ENCODE measurements at regions of chr7 and their contacts with region 1.

Region 1: DNA sequence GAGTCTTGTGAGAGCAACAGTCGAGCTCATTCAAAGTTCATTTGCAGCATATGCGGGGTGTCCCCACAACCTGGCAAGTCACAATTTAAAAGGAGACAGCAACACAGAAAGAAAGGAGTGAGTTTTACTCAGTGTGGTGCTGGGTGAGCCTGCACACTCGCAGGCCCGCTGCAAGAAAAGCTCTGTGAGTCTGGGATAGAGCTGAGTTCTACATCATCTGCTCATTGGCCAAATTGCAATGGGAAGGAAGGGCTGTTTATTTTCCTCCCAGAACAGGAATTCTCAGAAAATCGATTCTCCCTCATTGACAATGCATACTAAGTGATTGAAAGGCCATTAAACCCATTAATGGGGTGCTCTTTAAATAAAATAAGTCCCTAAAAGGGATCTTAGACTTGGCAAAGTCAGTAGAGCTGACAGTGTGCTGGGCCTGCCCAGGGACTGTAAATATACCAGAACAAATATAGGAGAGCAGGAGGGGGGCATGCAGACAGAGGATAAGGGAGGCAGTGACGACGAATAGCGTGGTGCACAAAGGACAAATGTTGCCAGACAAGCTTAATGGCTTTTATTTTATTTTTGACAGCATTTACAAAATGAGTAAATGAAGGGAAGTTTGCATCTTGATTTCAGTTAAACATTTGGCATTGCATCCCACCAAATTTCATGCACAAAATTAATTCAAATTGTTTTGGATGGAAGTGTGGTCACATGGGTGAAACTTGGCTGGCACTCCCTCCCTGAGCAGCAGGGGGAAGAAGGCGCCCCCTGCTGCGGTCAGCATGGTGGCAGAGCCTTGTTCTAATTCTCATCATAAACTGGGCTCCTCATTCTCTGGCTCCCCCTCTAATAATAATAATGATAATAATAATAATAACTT is 215.7 kb downstream of the SNX10 start:
- DNase-seq: no peak
- ATAC-seq: no peak
- H3K4me3 ChIP-seq: no peak overlapping the region
- H3K27ac ChIP-seq: no peak overlapping the region
- H3K4me1 ChIP-seq: peaks cover 11% of the 10 kb centered on the region; the same call in 1 of the 2 replicates
- H3K27me3 ChIP-seq: no peaks in the 10 kb centered on the region
- CTCF ChIP-seq: peak; percentile 30; the same call in 1 of the 2 replicates

Region 2: GRCh38 chr7:26278770-26279169 is 228.6 kb before region 1 on chr7:
- CTCF ChIA-PET with region 1: no interaction called
- POLR2A ChIA-PET with region 1: no interaction called
- intact Hi-C with region 1: loop called (anchors 5 kb)
- DNase-seq: peak; percentile 65
- ATAC-seq: peak; percentile 98
- H3K4me3 ChIP-seq: no peak overlapping the region
- H3K27ac ChIP-seq: no peak overlapping the region
- H3K4me1 ChIP-seq: no peaks in the 10 kb centered on the region
- H3K27me3 ChIP-seq: no peaks in the 10 kb centered on the region
- CTCF ChIP-seq: peak; percentile 79

Region 3: DNA sequence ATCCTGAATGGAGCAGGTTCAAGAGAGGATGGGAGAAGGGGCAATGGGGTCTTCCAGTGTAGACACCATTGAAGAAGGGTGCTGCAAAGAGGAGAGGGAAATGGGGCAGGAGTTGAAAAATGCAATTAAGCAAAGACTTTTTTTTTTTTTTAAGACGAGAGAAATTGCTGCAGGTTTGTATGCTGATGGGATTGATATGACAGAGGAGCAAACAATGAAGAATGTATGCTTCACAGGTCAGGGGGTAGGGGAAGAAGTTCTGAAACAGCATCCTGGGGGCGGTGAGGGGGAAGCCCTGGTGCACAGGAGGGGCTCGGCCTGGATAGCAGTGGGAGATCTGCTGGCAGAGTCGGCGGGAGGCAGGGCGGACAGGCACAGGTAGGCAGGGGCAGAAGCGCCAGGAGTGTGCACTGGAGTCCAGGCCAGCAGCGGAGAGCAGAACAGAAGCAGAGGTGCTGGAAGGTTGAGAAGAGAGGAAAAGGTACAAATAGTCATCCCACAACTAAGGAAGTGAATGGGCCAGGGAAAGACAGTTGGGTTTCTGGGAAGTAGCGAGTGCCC is 40.3 kb before region 1 on chr7:
- CTCF ChIA-PET with region 1: no interaction called
- POLR2A ChIA-PET with region 1: no interaction called
- intact Hi-C with region 1: no loop called
- DNase-seq: no peak
- ATAC-seq: no peak
- H3K4me3 ChIP-seq: no peak overlapping the region
- H3K27ac ChIP-seq: no peak overlapping the region
- H3K4me1 ChIP-seq: no peaks in the 10 kb centered on the region
- H3K27me3 ChIP-seq: no peaks in the 10 kb centered on the region
- CTCF ChIP-seq: no peak

Region 4: DNA sequence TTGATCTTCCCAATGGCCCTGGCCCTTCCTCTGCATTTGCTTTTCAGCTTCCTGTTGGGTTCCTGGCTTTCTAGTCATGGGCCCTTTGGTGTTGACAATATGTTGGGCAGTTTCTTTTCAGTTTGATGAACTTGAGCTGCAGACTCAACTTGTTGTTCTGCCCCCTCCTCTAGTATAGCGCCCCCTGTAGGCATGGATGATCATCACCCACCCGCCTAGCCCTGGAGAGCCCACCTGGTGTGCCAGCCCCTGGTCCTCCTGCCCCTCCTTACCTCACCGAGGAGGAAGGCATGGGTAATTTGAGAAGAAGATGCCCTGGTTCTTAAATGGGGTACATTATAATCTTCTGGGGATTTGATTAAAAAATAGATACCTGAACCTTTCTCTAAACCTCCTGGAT is 55.5 kb after region 1 on chr7:
- CTCF ChIA-PET with region 1: no interaction called
- POLR2A ChIA-PET with region 1: no interaction called
- intact Hi-C with region 1: loop called (anchors 5 kb)
- DNase-seq: no peak
- ATAC-seq: no peak
- H3K4me3 ChIP-seq: no peak overlapping the region
- H3K27ac ChIP-seq: no peak overlapping the region
- H3K4me1 ChIP-seq: peaks cover 24% of the 10 kb centered on the region
- H3K27me3 ChIP-seq: no peaks in the 10 kb centered on the region
- CTCF ChIP-seq: peak; percentile 44

Region 5: DNA sequence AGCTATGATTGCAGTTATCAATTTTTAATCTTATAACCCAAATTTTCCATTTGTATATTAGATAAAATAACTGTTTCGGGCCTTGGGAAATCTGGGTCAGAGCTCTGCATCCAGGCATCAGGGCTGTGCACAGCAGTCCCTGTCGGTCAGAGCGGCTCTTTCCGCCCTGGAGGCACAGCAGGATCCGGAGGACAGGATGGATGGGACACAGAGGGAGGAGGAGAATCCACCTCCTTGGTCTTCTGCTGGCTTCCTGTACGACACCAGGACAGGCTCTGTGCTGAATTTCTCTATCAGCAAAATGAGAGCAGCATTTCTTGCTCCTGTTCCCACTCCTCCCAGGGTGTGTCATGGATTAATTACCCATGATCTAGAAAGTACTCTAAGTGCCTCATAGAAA is 102.2 kb after region 1 on chr7:
- CTCF ChIA-PET with region 1: no interaction called
- POLR2A ChIA-PET with region 1: no interaction called
- intact Hi-C with region 1: loop called (anchors 5 kb)
- DNase-seq: peak; percentile 26
- ATAC-seq: peak; percentile 16; the same call in 1 of the 2 replicates
- H3K4me3 ChIP-seq: no peak overlapping the region
- H3K27ac ChIP-seq: peak overlapping the region; percentile 78
- H3K4me1 ChIP-seq: peaks cover 37% of the 10 kb centered on the region
- H3K27me3 ChIP-seq: no peaks in the 10 kb centered on the region
- CTCF ChIP-seq: no peak

Region 6: GRCh38 chr7:26648554-26648953 is 141.2 kb after region 1 on chr7:
- CTCF ChIA-PET with region 1: no interaction called
- POLR2A ChIA-PET with region 1: no interaction called
- intact Hi-C with region 1: loop called (anchors 5 kb)
- DNase-seq: peak; percentile 85
- ATAC-seq: peak; percentile 97
- H3K4me3 ChIP-seq: peak overlapping the region; percentile 22; the same call in 1 of the 2 replicates
- H3K27ac ChIP-seq: peak overlapping the region; percentile 68
- H3K4me1 ChIP-seq: peaks cover 36% of the 10 kb centered on the region
- H3K27me3 ChIP-seq: no peaks in the 10 kb centered on the region
- CTCF ChIP-seq: no peak